MCF 10A (cell line): ENCODE measurements at regions of chr1 and their contacts with region 1.

Region 1: DNA sequence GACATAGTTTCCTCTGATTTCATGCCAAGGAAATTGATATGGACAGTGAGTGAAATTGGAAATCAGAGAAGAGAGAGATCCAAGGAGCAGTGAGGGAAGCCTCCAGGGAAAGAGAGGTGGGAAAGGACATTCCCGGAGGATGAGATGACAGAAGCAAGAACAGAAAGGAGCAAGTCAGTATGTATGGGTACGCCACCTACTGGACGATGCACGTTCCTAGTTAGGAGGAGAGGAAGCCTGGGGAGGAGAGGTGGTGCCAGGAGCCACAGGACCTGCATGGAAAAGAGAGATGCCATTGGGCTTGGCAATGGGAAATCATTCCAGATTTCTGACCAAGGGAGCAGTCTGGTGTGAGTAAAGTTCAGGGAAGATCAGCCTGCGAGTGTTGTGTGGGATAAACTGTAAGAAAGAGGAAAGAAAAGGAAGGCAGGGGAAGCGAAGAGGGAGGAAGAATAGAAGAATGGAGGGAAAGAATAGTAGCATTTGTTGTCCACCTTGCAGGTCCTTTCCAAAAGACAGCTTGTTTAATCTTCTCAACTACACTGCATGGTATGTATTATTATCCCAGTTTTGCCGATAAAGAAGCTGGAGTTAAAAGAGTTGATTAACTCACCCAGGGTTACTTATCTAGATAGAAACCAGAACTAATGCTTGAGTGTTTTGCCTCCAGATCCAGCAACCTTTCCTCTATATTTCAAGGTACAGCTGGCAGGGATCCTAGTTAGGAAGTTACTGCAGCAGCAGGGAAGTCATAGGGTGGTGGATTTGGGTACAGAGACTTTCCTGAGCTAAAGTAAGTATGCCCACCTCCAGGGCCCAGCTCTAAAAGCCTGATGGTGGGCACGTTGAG is 27.4 kb downstream of the C1orf116 start:
- DNase-seq: peak; percentile 95
- H3K4me3 Mint-ChIP-seq: peak overlapping the region; percentile 1
- H3K27ac Mint-ChIP-seq: peak overlapping the region; percentile 30
- H3K4me1 Mint-ChIP-seq: peaks cover 58% of the 10 kb centered on the region
- H3K27me3 Mint-ChIP-seq: no peaks in the 10 kb centered on the region
- CTCF ChIP-seq: peak; percentile 85

Region 2: GRCh38 chr1:206962272-206962671 is 42.9 kb before region 1 on chr1:
- CTCF ChIA-PET with region 1: interaction called, 15 read pairs
- POLR2A ChIA-PET with region 1: no interaction called
- intact Hi-C with region 1: no loop called
- DNase-seq: no peak
- H3K4me3 Mint-ChIP-seq: no peak overlapping the region
- H3K27ac Mint-ChIP-seq: peak overlapping the region; percentile 1
- H3K4me1 Mint-ChIP-seq: peaks cover 27% of the 10 kb centered on the region
- H3K27me3 Mint-ChIP-seq: no peaks in the 10 kb centered on the region
- CTCF ChIP-seq: no peak

Region 3: DNA sequence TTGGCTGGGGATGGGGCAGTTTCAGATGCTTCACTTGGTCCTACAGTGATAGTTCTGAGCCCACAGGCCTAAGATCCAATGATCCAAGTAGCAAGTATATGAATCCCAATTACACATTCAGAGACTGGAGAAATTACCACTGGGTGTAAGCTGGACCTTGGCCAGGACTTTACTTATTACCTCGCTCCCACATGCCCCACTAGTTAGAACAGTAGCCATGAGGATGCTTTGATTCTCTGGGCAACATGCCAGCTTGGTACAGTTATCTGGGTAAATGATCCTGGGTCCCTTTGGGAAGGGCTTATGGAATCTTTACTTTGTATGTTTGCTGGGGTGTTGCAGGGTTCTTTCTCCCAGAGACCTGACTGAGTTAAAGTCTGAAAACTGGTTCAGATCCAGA is 29.9 kb before region 1 on chr1:
- CTCF ChIA-PET with region 1: interaction called, 72 read pairs
- POLR2A ChIA-PET with region 1: no interaction called
- intact Hi-C with region 1: no loop called
- DNase-seq: peak; percentile 22
- H3K4me3 Mint-ChIP-seq: no peak overlapping the region
- H3K27ac Mint-ChIP-seq: no peak overlapping the region
- H3K4me1 Mint-ChIP-seq: no peaks in the 10 kb centered on the region
- H3K27me3 Mint-ChIP-seq: peaks cover 17% of the 10 kb centered on the region
- CTCF ChIP-seq: no peak

Region 4: GRCh38 chr1:206992790-206993189 is 12.4 kb before region 1 on chr1:
- CTCF ChIA-PET with region 1: interaction called, 13 read pairs
- POLR2A ChIA-PET with region 1: interaction called, 936 read pairs
- intact Hi-C with region 1: no loop called
- DNase-seq: no peak
- H3K4me3 Mint-ChIP-seq: no peak overlapping the region
- H3K27ac Mint-ChIP-seq: no peak overlapping the region
- H3K4me1 Mint-ChIP-seq: no peaks in the 10 kb centered on the region
- H3K27me3 Mint-ChIP-seq: no peaks in the 10 kb centered on the region
- CTCF ChIP-seq: no peak

Region 5: DNA sequence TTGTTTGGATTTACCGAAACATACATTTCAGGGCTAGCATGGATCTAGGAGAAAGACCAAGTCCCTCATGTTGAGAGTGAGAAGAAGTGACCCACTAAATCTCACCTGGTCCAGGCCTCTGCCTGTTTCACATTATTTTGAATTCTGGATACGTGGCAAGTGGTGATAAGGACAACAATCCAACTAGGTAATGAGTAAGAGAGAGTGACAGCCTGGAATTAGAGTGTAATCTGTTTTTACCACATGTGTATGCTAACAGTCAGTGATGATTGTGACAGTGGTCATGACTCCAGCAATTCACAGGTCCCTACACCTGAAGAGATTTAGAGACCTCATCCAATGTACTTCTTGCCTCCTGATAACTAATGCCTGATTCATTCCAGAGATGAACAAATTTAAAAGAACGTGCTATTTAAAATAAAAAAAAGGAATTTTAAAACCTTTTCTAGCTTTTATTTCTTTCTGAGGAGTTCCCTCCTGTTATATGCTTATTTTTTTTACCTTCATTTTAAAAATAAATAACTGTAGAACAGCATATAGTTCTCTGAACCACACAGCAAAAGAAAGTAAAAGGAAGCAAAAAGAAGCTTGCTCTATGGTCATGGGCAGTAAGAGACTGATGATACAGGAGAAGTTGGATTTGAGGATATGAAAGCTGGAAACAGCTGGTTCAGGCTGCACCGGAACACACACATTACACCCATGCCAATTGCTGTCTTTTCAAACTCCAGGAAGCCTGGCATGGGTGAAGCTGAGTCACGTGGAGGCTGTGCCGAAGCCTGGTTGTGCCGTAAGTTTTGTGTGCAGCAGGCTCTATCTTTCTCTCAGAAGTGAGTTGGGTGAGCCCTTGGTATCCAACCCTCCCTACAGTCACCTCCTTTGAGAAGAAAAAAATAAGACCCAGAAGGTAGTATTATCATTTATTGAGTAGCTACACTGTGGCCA is 12.7 kb after region 1 on chr1:
- CTCF ChIA-PET with region 1: interaction called, 280 read pairs
- POLR2A ChIA-PET with region 1: interaction called, 936 read pairs
- intact Hi-C with region 1: no loop called
- DNase-seq: peak; percentile 89
- H3K4me3 Mint-ChIP-seq: no peak overlapping the region
- H3K27ac Mint-ChIP-seq: peak overlapping the region; percentile 60
- H3K4me1 Mint-ChIP-seq: peaks cover 49% of the 10 kb centered on the region
- H3K27me3 Mint-ChIP-seq: no peaks in the 10 kb centered on the region
- CTCF ChIP-seq: no peak

Region 6: GRCh38 chr1:207025144-207025880 is 20.1 kb after region 1 on chr1:
- CTCF ChIA-PET with region 1: interaction called, 280 read pairs
- POLR2A ChIA-PET with region 1: interaction called, 936 read pairs
- intact Hi-C with region 1: no loop called
- DNase-seq: no peak
- H3K4me3 Mint-ChIP-seq: peak overlapping the region; percentile 3
- H3K27ac Mint-ChIP-seq: peak overlapping the region; percentile 99
- H3K4me1 Mint-ChIP-seq: peaks cover 73% of the 10 kb centered on the region
- H3K27me3 Mint-ChIP-seq: no peaks in the 10 kb centered on the region
- CTCF ChIP-seq: no peak